Activated CD8-positive, alpha-beta T cell treated with anti-CD3 and anti-CD28 coated beads, Interleukin-2, amount 10 ng/mL, durations not matched to agents 7 days and 5 days (primary cell): ENCODE measurements at regions of chr3 and their contacts with region 1.

Region 1: DNA sequence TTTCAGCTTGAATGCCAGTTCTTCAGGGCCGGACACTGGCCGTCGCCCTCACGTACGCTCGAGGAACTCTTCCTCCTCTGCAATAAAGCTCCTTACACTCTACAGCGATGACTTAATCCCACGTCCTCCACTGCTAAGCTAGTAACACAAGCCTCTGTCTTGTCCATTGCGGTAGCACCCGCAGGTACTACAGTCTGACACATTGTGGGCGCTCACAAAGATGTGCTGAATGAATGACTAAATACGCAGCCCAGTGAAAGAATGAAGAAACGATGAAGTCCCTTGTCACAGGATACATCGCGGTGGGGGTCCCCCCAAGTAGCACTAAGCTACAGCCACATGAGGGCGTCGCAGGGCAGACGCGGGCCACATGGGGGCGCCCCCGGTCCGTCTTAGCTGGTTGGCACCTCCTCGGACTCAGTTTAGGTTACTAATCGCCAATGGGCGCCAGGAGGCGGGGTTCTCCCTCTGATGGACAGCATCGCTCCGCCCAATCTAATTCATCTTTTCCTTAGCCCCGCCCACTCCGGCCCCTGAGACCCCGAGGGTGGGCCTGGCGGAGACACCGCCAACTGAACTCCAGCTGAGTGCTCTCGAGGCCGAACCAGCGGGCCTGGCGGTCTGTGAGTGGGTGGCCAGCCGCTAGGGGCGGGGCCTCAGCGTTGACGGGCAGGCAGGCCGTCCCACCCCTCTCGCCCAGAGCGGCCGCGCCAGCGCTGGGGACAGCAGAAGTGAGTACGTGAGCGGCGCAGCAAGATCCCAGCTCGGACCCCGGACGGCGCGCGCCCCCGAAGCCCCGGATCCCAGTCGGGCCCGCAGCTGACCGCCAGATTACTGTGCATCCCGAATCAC is at the start of gene EPHB3:
- DNase-seq: peak; percentile 93
- ATAC-seq: peak; percentile 88
- H3K4me3 Mint-ChIP-seq: peak within 1 kb of the TSS; percentile 48
- H3K27ac Mint-ChIP-seq: no peak within 1 kb of the TSS
- H3K4me1 Mint-ChIP-seq: peaks cover 21% of the 10 kb centered on the region
- H3K27me3 Mint-ChIP-seq: peaks cover 47% of the 10 kb centered on the region
- total RNA-seq, gene EPHB3: 0.11 to 0.13 TPM

Region 2: DNA sequence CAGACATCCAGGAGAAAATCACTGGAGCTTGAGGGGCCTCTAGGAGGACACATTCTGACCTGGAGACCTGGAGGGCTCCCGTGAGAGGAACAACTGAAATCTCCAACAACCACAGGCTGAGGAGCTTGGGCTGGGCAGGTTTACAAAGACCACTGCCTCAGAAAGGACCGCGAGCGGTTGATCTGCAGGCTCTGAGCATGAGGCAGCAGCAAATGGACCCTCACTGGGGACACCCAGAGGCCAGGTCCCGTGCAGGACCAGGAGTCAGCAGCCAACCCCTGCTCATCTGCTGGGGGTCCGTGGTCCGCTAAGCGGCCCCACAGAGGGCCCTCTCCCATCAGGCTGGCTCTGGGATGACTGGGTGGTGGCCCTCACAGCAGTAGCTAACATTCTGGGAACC is 10.2 kb before region 1 on chr3:
- CTCF ChIA-PET with region 1: no interaction called
- POLR2A ChIA-PET with region 1: no interaction called
- DNase-seq: no peak
- ATAC-seq: no peak
- H3K4me3 Mint-ChIP-seq: no peak overlapping the region
- H3K27ac Mint-ChIP-seq: no peak overlapping the region
- H3K4me1 Mint-ChIP-seq: peaks cover 2% of the 10 kb centered on the region
- H3K27me3 Mint-ChIP-seq: peaks cover 9% of the 10 kb centered on the region

Region 3: GRCh38 chr3:184652474-184652873 is 91.2 kb after region 1 on chr3:
- CTCF ChIA-PET with region 1: no interaction called
- POLR2A ChIA-PET with region 1: no interaction called
- DNase-seq: no peak
- ATAC-seq: no peak
- H3K4me3 Mint-ChIP-seq: no peak overlapping the region
- H3K27ac Mint-ChIP-seq: no peak overlapping the region
- H3K4me1 Mint-ChIP-seq: no peaks in the 10 kb centered on the region
- H3K27me3 Mint-ChIP-seq: peaks cover 4% of the 10 kb centered on the region

Region 4: GRCh38 chr3:184734903-184735701 is 173.8 kb after region 1 on chr3:
- CTCF ChIA-PET with region 1: interaction called, 18 read pairs
- POLR2A ChIA-PET with region 1: no interaction called
- DNase-seq: no peak
- ATAC-seq: no peak
- H3K4me3 Mint-ChIP-seq: no peak overlapping the region
- H3K27ac Mint-ChIP-seq: no peak overlapping the region
- H3K4me1 Mint-ChIP-seq: no peaks in the 10 kb centered on the region
- H3K27me3 Mint-ChIP-seq: peaks cover 10% of the 10 kb centered on the region

Region 5: DNA sequence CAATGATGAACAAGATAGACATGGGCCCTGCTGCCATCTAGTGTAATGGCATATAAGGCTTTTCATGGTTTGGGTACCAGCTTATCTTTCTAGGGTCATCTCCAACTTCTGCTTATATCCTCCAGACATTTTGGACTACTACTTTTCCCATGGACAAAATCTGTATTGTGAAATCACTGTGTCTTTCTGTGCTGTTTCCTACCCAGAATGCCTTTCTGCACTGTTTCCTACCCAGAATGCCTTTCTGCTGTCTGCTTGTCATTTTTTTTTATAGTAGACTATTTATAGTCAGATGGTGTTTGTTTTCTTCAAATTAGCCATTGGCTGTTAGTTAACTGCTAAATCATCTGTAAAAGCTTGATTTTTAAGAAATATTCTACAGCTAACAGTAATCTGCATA is 270.8 kb after region 1 on chr3:
- CTCF ChIA-PET with region 1: interaction called, 10 read pairs
- POLR2A ChIA-PET with region 1: no interaction called
- DNase-seq: no peak
- ATAC-seq: no peak
- H3K4me3 Mint-ChIP-seq: no peak overlapping the region
- H3K27ac Mint-ChIP-seq: no peak overlapping the region
- H3K4me1 Mint-ChIP-seq: no peaks in the 10 kb centered on the region
- H3K27me3 Mint-ChIP-seq: no peaks in the 10 kb centered on the region